SK-N-SH (cell line): ENCODE measurements at regions of chr11 and their contacts with region 1.

Region 1: GRCh38 chr11:112837162-112837826 is 123.9 kb upstream of the NCAM1 start:
- DNase-seq: peak; percentile 33
- H3K4me3 ChIP-seq: no peak overlapping the region
- H3K27ac ChIP-seq: peak overlapping the region in 1 of 2 experiments; percentile 97; a peak in 2 of 4 replicates
- H3K4me1 ChIP-seq: peaks cover 18 to 52% of the 10 kb centered on the region in 2 experiments
- H3K27me3 ChIP-seq: no peaks in the 10 kb centered on the region
- CTCF ChIP-seq: peak; percentile 23; the same call in 1 of the 2 replicates
- EP300 ChIP-seq: no peak
- RAD21 ChIP-seq: peak; percentile 57

Region 2: DNA sequence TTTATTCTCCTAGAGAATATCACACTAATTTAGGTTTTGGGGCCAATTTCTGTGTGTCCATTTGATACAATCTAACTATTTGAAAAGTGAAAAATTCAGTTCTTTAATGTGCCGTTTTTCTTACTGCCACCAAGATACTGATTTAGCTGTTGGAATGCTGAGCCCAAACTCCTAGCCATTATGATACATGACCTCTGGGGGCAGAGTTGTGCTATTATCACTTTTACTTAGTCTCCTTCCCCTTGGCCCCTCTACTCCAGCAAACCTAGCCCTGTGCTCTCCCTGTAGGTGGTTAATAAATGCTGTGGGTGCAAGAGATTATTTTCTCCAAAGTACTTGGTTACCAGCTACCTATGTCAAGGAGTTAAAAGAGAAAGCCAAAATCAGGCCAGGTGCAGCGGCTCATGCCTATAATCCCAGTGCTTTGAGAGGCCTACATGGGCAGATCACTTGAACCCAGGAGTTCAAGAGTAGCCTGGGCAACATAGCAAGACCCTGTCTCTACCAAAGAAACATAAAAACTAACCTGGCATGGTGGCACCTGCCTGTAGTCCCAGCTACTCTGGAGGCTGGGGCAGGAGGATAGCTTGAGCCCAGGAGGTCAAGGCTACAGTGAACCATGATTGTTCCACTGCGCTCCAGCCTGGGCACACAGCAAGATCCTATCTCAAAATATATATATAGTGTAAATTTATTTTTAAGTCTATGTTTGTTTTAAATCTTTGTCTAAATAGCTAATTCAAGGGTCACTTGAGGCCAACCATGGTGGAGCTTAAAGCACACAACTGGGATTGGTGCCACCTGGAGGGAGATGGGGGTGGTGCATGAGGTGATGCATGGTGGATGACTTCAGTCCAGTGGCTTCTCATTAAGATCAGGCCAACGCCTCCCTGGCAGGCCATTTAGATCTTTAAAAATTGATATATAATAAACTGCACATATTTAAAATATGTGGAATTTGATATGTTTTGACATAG is 383.4 kb before region 1 on chr11:
- CTCF ChIA-PET with region 1: no interaction called
- POLR2A ChIA-PET with region 1: no interaction called
- DNase-seq: peak; percentile 51
- H3K4me3 ChIP-seq: no peak overlapping the region
- H3K27ac ChIP-seq: no peak overlapping the region
- H3K4me1 ChIP-seq: peaks cover 0 to 9% of the 10 kb centered on the region in 2 experiments; a peak in 1 of 4 replicates
- H3K27me3 ChIP-seq: no peaks in the 10 kb centered on the region; the same call in 1 of the 2 replicates
- CTCF ChIP-seq: peak; percentile 52
- EP300 ChIP-seq: no peak
- RAD21 ChIP-seq: peak; percentile 44

Region 3: DNA sequence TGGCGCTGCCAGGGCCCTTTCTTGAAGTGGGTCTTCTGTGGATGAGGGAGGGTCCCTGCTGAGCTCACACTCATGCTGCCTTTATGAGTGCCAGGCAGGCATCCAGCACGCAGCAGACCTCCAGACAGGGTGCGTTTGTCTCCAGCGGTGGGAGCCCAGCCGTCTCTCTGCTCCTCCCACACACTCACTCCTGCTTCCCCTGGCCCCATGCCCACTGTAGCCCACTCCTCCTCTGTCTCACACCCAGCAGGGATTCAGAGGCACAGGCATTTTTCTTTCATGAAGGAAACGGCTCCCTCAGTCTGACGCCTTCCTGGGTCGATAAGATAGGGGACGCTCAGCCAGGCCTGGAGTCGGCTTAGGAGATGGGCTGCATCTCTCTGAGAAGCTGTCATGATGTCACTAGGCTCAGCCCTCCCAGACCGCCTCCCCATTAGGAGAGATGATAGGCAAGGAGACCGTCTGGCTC is 60.0 kb before region 1 on chr11:
- CTCF ChIA-PET with region 1: no interaction called
- POLR2A ChIA-PET with region 1: interaction called, 11 read pairs
- DNase-seq: peak; percentile 84
- H3K4me3 ChIP-seq: no peak overlapping the region; a peak in 1 of 4 replicates
- H3K27ac ChIP-seq: peak overlapping the region; percentile 22 to 99; a peak in 3 of 4 replicates
- H3K4me1 ChIP-seq: peaks cover 10 to 57% of the 10 kb centered on the region in 2 experiments
- H3K27me3 ChIP-seq: no peaks in the 10 kb centered on the region
- CTCF ChIP-seq: no peak
- EP300 ChIP-seq: no peak; a peak in 1 of 4 replicates
- RAD21 ChIP-seq: no peak; the same call in none of the 2 replicates

Region 4: GRCh38 chr11:112795142-112795815 is 42.0 kb before region 1 on chr11:
- CTCF ChIA-PET with region 1: interaction called, 13 read pairs
- POLR2A ChIA-PET with region 1: no interaction called
- DNase-seq: peak; percentile 56
- H3K4me3 ChIP-seq: no peak overlapping the region; a peak in 1 of 4 replicates
- H3K27ac ChIP-seq: no peak overlapping the region
- H3K4me1 ChIP-seq: peaks cover 0 to 22% of the 10 kb centered on the region in 2 experiments; a peak in 1 of 4 replicates
- H3K27me3 ChIP-seq: no peaks in the 10 kb centered on the region
- CTCF ChIP-seq: peak; percentile 78
- EP300 ChIP-seq: no peak
- RAD21 ChIP-seq: peak; percentile 71